ENCODE measurements at regions of chr17 and their contacts with region 1.

Region 1: DNA sequence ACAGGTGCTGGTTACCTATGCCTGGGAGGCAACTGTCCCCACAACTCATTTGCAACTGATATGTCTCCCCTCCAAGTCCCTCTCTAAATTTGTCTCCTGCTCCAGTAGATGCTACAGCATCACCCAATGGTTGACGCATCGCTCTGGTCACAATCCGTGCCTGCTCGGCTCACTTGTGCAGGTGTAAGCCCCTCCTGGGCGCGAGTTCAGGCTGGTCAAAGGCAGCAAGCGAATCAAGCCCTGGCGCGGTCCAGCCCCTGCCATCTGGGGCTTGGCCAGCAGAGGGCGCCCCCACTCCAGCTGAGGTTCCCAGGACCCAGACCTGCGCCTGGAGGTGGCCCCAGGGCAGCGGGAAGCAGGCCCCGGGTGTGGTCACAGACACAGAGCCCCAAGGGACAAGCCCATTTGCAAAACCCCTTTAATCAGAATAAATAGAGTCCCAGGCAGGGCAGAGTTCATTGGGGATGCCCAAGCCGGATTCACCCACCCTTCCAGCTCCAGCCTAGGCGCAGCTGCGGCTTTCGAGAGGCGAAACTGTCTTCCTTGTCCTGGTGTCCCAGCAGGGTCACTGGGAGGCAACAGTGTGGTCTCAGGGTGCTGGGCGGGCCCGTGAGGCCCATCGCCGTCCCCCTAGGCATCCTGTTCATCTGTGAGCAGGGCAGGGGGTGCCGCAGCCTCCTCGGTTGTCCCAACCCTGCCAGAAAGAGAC is 15.9 kb downstream of the TMC6 start:
- DNase-seq: peak; percentile 33
- ATAC-seq: peak; percentile 93
- H3K4me3 ChIP-seq: no peak overlapping the region
- H3K27ac ChIP-seq: no peak overlapping the region; the same call in 1 of the 2 replicates
- H3K4me1 ChIP-seq: peaks cover 0 to 4% of the 10 kb centered on the region in 2 experiments; a peak in 1 of 4 replicates
- H3K27me3 ChIP-seq: no peaks in the 10 kb centered on the region
- CTCF ChIP-seq: peak; percentile 97 to 100 (median 100)
- POLR2A ChIP-seq: no peak
- RAD21 ChIP-seq: peak; percentile 99

Region 2: GRCh38 chr17:77657839-77658238 is 454.8 kb before region 1 on chr17:
- CTCF ChIA-PET with region 1: no interaction called
- POLR2A ChIA-PET with region 1: no interaction called
- RAD21 ChIA-PET with region 1: no interaction called
- intact Hi-C with region 1: no loop called
- DNase-seq: no peak
- ATAC-seq: no peak
- H3K4me3 ChIP-seq: no peak overlapping the region
- H3K27ac ChIP-seq: no peak overlapping the region
- H3K4me1 ChIP-seq: no peaks in the 10 kb centered on the region
- H3K27me3 ChIP-seq: peaks cover 58% of the 10 kb centered on the region
- CTCF ChIP-seq: no peak
- POLR2A ChIP-seq: no peak
- RAD21 ChIP-seq: no peak

Region 3: DNA sequence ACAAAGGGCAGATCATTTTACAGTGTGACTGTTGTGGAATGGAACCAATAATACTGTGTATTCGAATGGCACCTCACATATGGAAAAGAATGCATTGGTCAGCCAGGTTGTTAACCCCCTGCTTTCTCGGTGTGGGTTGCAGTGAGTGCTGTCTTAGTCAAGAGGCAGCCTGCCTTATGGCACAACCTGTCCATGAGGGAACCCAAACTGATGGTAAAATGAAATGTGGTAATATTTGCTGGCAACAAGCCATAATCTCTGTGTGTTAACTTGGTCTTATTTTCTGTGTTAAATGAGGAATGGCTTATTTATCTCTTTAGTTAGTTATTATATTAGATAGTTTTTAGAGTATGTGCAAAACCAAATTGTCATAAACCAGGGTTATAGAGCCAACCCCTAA is 65.7 kb before region 1 on chr17:
- CTCF ChIA-PET with region 1: no interaction called
- POLR2A ChIA-PET with region 1: no interaction called
- RAD21 ChIA-PET with region 1: no interaction called
- intact Hi-C with region 1: no loop called
- DNase-seq: no peak
- ATAC-seq: no peak
- H3K4me3 ChIP-seq: no peak overlapping the region
- H3K27ac ChIP-seq: no peak overlapping the region
- H3K4me1 ChIP-seq: peaks cover 4 to 13% of the 10 kb centered on the region in 2 experiments
- H3K27me3 ChIP-seq: no peaks in the 10 kb centered on the region
- CTCF ChIP-seq: no peak
- POLR2A ChIP-seq: no peak
- RAD21 ChIP-seq: no peak

Region 4: GRCh38 chr17:78075545-78075944 is 37.1 kb before region 1 on chr17:
- CTCF ChIA-PET with region 1: no interaction called
- POLR2A ChIA-PET with region 1: no interaction called
- RAD21 ChIA-PET with region 1: no interaction called
- intact Hi-C with region 1: no loop called
- DNase-seq: no peak
- ATAC-seq: no peak
- H3K4me3 ChIP-seq: no peak overlapping the region
- H3K27ac ChIP-seq: no peak overlapping the region
- H3K4me1 ChIP-seq: no peaks in the 10 kb centered on the region
- H3K27me3 ChIP-seq: no peaks in the 10 kb centered on the region
- CTCF ChIP-seq: no peak
- POLR2A ChIP-seq: no peak
- RAD21 ChIP-seq: no peak

Region 5: GRCh38 chr17:78176548-78177025 is 63.9 kb after region 1 on chr17:
- CTCF ChIA-PET with region 1: interaction called, 17 read pairs
- POLR2A ChIA-PET with region 1: interaction called, 3 read pairs
- RAD21 ChIA-PET with region 1: interaction called in 1 of 2 experiments, 4 read pairs
- intact Hi-C with region 1: loop called (anchors 1 kb)
- DNase-seq: no peak
- ATAC-seq: peak; percentile 78
- H3K4me3 ChIP-seq: no peak overlapping the region
- H3K27ac ChIP-seq: peak overlapping the region; percentile 20
- H3K4me1 ChIP-seq: peaks cover 12 to 30% of the 10 kb centered on the region in 2 experiments; a peak in 3 of 4 replicates
- H3K27me3 ChIP-seq: no peaks in the 10 kb centered on the region
- CTCF ChIP-seq: peak; percentile 81 to 99 (median 99); a peak in 5 of 6 replicates
- POLR2A ChIP-seq: no peak
- RAD21 ChIP-seq: peak; percentile 87

Region 6: GRCh38 chr17:78421484-78422266 is 309.0 kb after region 1 on chr17:
- CTCF ChIA-PET with region 1: no interaction called
- POLR2A ChIA-PET with region 1: no interaction called
- RAD21 ChIA-PET with region 1: no interaction called
- intact Hi-C with region 1: loop called (anchors 10 kb)
- DNase-seq: peak; percentile 51
- ATAC-seq: peak; percentile 95
- H3K4me3 ChIP-seq: no peak overlapping the region
- H3K27ac ChIP-seq: no peak overlapping the region
- H3K4me1 ChIP-seq: no peaks in the 10 kb centered on the region
- H3K27me3 ChIP-seq: no peaks in the 10 kb centered on the region
- CTCF ChIP-seq: peak; percentile 98 to 100 (median 100)
- POLR2A ChIP-seq: no peak
- RAD21 ChIP-seq: peak; percentile 98

Region 7: GRCh38 chr17:79137015-79137788 is 1024.5 kb after region 1 on chr17:
- CTCF ChIA-PET with region 1: no interaction called
- POLR2A ChIA-PET with region 1: no interaction called
- RAD21 ChIA-PET with region 1: no interaction called
- intact Hi-C with region 1: no loop called
- DNase-seq: no peak
- ATAC-seq: no peak
- H3K4me3 ChIP-seq: no peak overlapping the region
- H3K27ac ChIP-seq: no peak overlapping the region
- H3K4me1 ChIP-seq: no peaks in the 10 kb centered on the region
- H3K27me3 ChIP-seq: peaks cover 45% of the 10 kb centered on the region; the same call in 1 of the 2 replicates
- CTCF ChIP-seq: no peak
- POLR2A ChIP-seq: no peak
- RAD21 ChIP-seq: no peak